IMR-90 (cell line): ENCODE measurements at regions of chr12 and their contacts with region 1.

Region 1: GRCh38 chr12:2613326-2614073 is 181.3 kb upstream of the FKBP4 start:
- DNase-seq: peak; percentile 99
- ATAC-seq: peak; percentile 93
- H3K4me3 ChIP-seq: no peak overlapping the region
- H3K27ac ChIP-seq: peak overlapping the region; percentile 77
- H3K4me1 ChIP-seq: peaks cover 27% of the 10 kb centered on the region
- H3K27me3 ChIP-seq: no peaks in the 10 kb centered on the region
- CTCF ChIP-seq: no peak
- POLR2A ChIP-seq: peak; percentile 60
- RAD21 ChIP-seq: peak; percentile 17

Region 2: DNA sequence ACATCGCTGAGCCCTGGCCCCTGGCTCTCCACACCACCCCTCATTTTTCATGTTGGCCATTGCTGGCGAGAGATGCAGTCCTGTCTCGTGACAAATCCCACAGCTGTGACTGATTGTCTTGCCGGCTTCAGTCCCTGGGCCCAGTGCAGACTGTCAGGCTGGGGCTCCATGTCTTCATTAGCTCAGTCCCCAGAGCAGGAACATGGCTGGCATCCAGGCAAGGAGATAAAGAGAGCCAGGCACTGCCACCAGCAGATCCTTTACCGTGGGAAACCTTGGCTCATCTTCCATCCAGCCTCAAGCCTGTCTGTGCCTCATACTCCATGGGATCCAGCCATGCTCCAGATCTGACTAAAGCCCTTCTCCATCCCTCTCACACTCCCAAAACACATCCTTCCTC is 103.5 kb before region 1 on chr12:
- CTCF ChIA-PET with region 1: no interaction called
- POLR2A ChIA-PET with region 1: no interaction called
- dilution Hi-C with region 1: no loop called
- in situ Hi-C with region 1: no loop called
- intact Hi-C with region 1: no loop called
- DNase-seq: no peak
- ATAC-seq: no peak
- H3K4me3 ChIP-seq: no peak overlapping the region
- H3K27ac ChIP-seq: no peak overlapping the region
- H3K4me1 ChIP-seq: no peaks in the 10 kb centered on the region
- H3K27me3 ChIP-seq: no peaks in the 10 kb centered on the region; the same call in 1 of the 2 replicates
- CTCF ChIP-seq: no peak
- POLR2A ChIP-seq: no peak
- RAD21 ChIP-seq: no peak

Region 3: GRCh38 chr12:2640705-2641104 is 27.2 kb after region 1 on chr12:
- CTCF ChIA-PET with region 1: no interaction called
- POLR2A ChIA-PET with region 1: no interaction called
- dilution Hi-C with region 1: no loop called
- in situ Hi-C with region 1: no loop called
- intact Hi-C with region 1: loop called (anchors 2 kb)
- DNase-seq: peak; percentile 99
- ATAC-seq: peak; percentile 99
- H3K4me3 ChIP-seq: no peak overlapping the region
- H3K27ac ChIP-seq: peak overlapping the region; percentile 76
- H3K4me1 ChIP-seq: peaks cover 17% of the 10 kb centered on the region
- H3K27me3 ChIP-seq: no peaks in the 10 kb centered on the region
- CTCF ChIP-seq: no peak
- POLR2A ChIP-seq: no peak; the same call in none of the 2 replicates
- RAD21 ChIP-seq: 0 out of 2 replicates have a peak, but pooled peaks have one; percentile 12

Region 4: DNA sequence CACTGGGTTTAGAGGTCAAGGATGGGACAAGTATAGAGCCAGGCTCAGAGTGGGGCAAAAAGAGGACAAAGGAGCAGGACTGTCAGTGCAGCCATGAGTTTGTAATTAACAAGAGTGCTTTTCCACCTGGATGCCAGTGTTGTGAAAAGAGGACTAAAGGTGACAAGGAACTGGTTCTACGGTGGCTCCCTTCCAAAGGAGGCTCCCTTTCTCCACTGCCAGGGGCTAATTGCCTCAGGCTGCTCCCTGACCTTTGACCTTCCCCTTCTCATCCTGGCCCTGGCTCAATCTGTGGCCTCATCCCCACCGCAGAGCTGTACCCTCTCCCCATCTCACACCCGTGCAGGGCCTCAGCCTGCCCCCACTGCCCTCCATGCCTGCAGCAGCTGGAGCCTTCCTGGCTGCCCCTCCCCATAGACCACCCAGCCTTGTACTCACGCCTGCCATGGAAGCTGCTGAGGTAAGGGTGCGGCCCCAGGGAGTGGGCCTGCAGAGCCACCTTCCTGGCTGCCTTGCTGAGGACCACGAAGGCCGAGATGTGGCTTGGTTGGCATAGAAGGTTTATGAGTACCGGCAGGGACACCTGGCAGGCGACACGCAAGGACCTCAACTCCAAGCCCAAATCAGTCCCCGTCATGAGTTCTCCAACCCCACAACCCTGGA is 156.5 kb after region 1 on chr12:
- CTCF ChIA-PET with region 1: no interaction called
- POLR2A ChIA-PET with region 1: no interaction called
- dilution Hi-C with region 1: no loop called
- in situ Hi-C with region 1: no loop called
- intact Hi-C with region 1: no loop called
- DNase-seq: no peak
- ATAC-seq: no peak
- H3K4me3 ChIP-seq: no peak overlapping the region
- H3K27ac ChIP-seq: no peak overlapping the region
- H3K4me1 ChIP-seq: no peaks in the 10 kb centered on the region
- H3K27me3 ChIP-seq: peaks cover 60% of the 10 kb centered on the region
- CTCF ChIP-seq: no peak
- POLR2A ChIP-seq: no peak
- RAD21 ChIP-seq: no peak